Head of caudate nucleus (tissue), 42 donors: ENCODE measurements at regions of chr17 and their contacts with region 1.

Region 1: DNA sequence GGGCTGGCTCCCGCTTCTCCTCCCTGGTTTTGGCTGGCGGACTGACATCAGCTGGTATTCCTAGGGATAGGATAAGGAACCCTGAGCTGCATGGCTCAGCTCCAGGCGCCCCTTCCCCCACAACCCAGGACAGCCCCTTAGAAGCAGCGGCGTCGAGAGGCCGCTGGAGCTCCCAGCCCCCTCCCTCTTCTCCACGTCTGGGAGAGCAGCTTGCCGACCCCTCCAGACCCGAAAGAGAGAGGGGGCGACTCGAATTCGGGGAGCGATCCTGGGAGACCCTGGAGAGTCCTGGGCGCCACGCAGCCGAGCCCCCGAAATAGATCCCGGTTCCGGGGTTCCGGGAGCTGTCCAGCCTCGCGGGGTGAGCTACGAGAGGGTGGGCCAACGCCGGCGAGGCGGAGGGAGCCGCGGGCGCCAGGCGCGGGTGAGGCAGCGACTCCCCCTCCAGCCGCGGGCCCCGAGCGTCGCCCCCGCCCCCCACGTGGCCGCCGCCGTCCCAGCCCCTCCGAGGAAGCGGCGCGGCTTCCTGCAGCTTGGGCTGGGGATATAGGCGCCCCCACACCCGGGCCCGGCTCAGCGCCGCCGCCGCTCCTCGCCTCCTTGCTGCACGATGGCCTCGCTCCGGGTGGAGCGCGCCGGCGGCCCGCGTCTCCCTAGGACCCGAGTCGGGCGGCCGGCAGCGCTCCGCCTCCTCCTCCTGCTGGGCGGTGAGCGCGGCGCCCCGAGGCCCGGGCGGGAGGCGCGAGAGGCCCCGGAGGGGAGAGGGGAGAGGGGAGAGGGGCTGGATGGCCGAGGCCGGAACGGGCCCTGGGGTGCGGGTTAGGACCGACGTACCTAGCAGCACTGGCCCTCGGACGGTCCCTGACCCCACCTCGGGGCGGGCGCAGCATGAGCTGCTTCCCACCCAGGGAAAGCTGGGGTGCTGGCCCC is at the start of gene RAMP2:
- DNase-seq: peak in 2 of 42 donors; percentile 32 to 35

Region 2: GRCh38 chr17:42609182-42609813 is 151.6 kb before region 1 on chr17 and contains the starts of genes RETREG3 and TUBG1:
- intact Hi-C with region 1: no loop called
- DNase-seq: peak; percentile 96 to 100 (median 99)

Region 3: DNA sequence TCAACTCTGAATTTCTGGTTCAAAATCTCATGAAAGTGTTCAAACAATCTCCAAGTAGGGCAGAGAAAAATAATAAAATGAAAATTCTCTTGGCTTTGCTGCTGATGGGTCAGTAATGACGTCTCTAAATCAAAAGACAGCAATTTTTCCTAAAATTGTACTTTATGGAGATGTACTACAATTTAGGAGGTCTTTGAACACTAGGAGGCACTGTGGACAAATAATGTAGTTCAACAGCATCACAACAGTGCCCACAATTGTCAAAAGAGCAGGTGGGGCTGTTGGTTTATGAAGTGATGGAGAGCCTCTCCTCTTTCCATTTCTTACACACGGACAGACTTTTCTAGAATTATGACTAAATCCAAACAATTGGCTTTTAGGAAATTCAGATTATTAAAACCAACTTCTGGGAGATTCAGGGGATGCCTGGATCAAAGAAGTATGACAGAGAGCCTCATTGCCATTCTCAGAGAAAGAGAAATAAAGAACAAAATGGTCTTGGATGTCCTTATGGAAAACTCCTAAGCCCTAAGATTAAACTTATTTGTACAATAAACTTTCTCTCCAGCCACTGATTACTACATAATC is 39.8 kb before region 1 on chr17:
- intact Hi-C with region 1: loop called (anchors 5 kb)
- DNase-seq: peak in 14 of 42 donors; percentile 16 to 78 (median 58)

Region 4: DNA sequence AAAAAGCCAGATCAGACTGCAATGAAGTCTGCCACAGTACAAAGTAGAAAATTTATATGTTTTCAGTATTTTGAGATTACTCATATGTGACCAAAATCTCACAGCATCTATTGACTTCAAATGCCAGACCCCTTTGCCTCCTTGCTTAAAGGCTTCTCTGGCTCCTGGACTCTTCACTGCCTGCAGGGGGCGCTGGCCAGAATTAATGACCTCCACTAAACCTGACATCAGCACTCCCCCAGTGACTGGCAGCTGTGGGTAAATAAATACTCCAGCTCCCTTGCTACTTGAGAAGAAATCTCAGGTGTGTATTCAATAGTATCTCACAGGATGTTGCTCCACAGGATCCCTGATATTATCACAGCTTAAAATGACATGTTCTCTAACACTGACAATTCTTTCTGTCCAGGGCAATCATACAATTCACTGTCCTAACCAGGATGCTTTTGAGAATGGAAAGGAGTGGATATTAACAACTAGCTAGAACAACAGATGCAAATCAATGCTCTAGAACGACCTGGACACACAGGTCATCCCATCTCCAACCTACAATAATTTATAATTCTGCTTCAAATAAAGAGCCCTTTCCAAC is 59.1 kb after region 1 on chr17:
- intact Hi-C with region 1: no loop called
- DNase-seq: peak in 26 of 42 donors; percentile 9 to 70 (median 38)